IMR-90 (cell line): ENCODE measurements at regions of chr17 and their contacts with region 1.

Region 1: GRCh38 chr17:632560-632959 is 82.1 kb downstream of the VPS53 start:
- DNase-seq: no peak
- ATAC-seq: no peak
- H3K4me3 ChIP-seq: no peak overlapping the region
- H3K27ac ChIP-seq: no peak overlapping the region
- H3K4me1 ChIP-seq: no peaks in the 10 kb centered on the region; the same call in 1 of the 2 replicates
- H3K27me3 ChIP-seq: no peaks in the 10 kb centered on the region
- CTCF ChIP-seq: no peak
- POLR2A ChIP-seq: no peak
- RAD21 ChIP-seq: no peak

Region 2: DNA sequence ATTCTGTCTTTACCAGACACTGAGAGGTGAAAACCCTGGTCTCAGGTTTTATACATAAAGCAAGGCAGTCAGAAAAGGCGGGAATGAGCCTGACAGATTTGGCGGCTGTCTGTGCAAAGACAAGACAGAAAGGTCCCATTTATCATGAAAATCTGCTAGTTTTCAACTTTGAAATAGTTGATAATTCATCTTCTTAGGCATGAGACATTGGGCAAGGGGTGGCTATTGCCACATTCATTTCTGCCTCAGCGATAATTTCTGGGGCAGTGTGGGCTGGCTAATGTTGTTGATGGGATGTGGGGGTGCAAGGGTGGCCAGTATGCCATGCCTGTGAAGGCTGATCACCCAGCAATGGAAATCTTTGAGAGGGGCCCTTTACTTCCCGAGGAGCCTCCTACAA is 106.1 kb before region 1 on chr17:
- CTCF ChIA-PET with region 1: no interaction called
- POLR2A ChIA-PET with region 1: interaction called, 11 read pairs
- dilution Hi-C with region 1: no loop called
- in situ Hi-C with region 1: no loop called
- intact Hi-C with region 1: no loop called
- DNase-seq: no peak
- ATAC-seq: no peak
- H3K4me3 ChIP-seq: no peak overlapping the region
- H3K27ac ChIP-seq: no peak overlapping the region
- H3K4me1 ChIP-seq: no peaks in the 10 kb centered on the region
- H3K27me3 ChIP-seq: no peaks in the 10 kb centered on the region
- CTCF ChIP-seq: no peak
- POLR2A ChIP-seq: no peak
- RAD21 ChIP-seq: no peak